ENCODE measurements at regions of chr2 and their contacts with region 1.

Region 1: DNA sequence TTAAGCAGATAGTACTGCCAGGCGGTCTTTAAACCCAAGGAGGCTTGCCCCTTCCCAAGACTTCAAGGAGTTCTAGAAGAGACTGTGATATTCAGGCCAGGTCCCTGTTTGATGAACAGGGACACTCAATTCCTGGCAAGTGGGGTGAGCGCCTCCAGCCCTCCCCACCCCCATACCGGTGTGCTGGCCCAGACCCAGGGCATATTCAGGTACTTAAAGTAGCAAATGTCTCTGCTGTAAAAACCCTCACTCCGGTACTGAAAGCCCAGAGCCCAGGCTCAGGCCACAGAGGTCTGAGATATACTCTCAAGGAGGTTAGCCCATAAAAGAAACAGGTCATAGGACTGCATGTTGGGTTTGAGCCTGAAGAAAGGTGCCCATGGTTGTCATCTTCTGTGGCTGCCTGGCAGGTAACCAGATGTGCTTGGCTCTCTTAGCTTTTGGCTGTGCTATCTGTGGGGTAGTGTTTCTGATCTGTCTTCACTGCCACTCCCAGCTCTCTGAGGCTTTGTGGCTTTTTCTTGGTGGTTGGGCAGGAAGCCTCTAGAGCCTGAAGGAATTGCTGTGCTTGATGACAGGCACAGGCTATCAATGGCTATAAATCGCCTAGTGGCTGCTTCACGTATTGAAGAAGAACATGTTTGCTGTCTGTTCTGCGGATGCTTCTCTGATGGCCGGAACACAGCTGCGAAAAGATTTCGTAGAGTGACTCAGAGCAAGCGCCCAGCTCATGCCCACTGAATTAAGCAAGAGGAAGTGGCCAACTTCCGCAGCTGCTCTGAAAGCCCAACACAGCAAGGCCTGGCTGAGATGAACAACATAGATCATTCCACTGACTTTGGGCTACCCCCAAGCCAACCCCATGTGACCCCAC is 63.3 kb upstream of the ALPP start:
- DNase-seq: peak; percentile 31 to 78 (median 70)
- ATAC-seq: peak; percentile 91
- H3K4me3 ChIP-seq: peak overlapping the region; percentile 25
- H3K4me3 Mint-ChIP-seq: peak overlapping the region; percentile 66 to 88 (median 78)
- H3K27ac ChIP-seq: peak overlapping the region; percentile 62
- H3K27ac Mint-ChIP-seq: peak overlapping the region; percentile 90 to 97 (median 92)
- H3K4me1 ChIP-seq: peaks cover 64 to 77% of the 10 kb centered on the region in 2 donors
- H3K4me1 Mint-ChIP-seq: peaks cover 62 to 100% (median 94%) of the 10 kb centered on the region in 7 donors
- H3K27me3 ChIP-seq: no peaks in the 10 kb centered on the region
- H3K27me3 Mint-ChIP-seq: no peaks in the 10 kb centered on the region

Region 2: GRCh38 chr2:231780909-231781797 is 534.1 kb before region 1 on chr2 and contains the start of gene PDE6D:
- CTCF ChIA-PET with region 1: no interaction called
- POLR2A ChIA-PET with region 1: no interaction called
- intact Hi-C with region 1: loop called in 1 of 2 experiments (anchors 10 kb)
- DNase-seq: peak; percentile 90 to 98 (median 94)
- ATAC-seq: peak; percentile 94
- H3K4me3 ChIP-seq: peak within 1 kb of the TSS; percentile 100
- H3K4me3 Mint-ChIP-seq: peak within 1 kb of the TSS; percentile 85 to 99 (median 98)
- H3K27ac ChIP-seq: peak within 1 kb of the TSS; percentile 82
- H3K27ac Mint-ChIP-seq: peak within 1 kb of the TSS; percentile 90 to 98 (median 94)
- H3K4me1 ChIP-seq: peaks cover 26 to 30% of the 10 kb centered on the region in 2 donors
- H3K4me1 Mint-ChIP-seq: peaks cover 45 to 76% (median 57%) of the 10 kb centered on the region in 7 donors
- H3K27me3 ChIP-seq: no peaks in the 10 kb centered on the region
- H3K27me3 Mint-ChIP-seq: peaks cover 0 to 5% (median 0%) of the 10 kb centered on the region in 5 donors
- total RNA-seq, gene PDE6D: 14.3 to 35.7 (median 25.2) TPM

Region 3: GRCh38 chr2:231961349-231962166 is 353.7 kb before region 1 on chr2 and contains the start of gene DIS3L2:
- CTCF ChIA-PET with region 1: no interaction called
- POLR2A ChIA-PET with region 1: interaction called, 5 read pairs
- intact Hi-C with region 1: loop called in 1 of 2 experiments (anchors 1 kb)
- DNase-seq: peak; percentile 66 to 83 (median 81)
- ATAC-seq: peak; percentile 96
- H3K4me3 ChIP-seq: peak within 1 kb of the TSS; percentile 79
- H3K4me3 Mint-ChIP-seq: peak within 1 kb of the TSS; percentile 83 to 96 (median 91)
- H3K27ac ChIP-seq: peak within 1 kb of the TSS; percentile 77
- H3K27ac Mint-ChIP-seq: peak within 1 kb of the TSS; percentile 78 to 96 (median 94)
- H3K4me1 ChIP-seq: peaks cover 14 to 17% of the 10 kb centered on the region in 2 donors
- H3K4me1 Mint-ChIP-seq: peaks cover 22 to 52% (median 45%) of the 10 kb centered on the region in 7 donors
- H3K27me3 ChIP-seq: no peaks in the 10 kb centered on the region
- H3K27me3 Mint-ChIP-seq: peaks cover 0 to 3% (median under 1%) of the 10 kb centered on the region in 5 donors
- total RNA-seq, gene DIS3L2: 47.1 to 78.4 (median 66.4) TPM

Region 4: GRCh38 chr2:232142049-232142448 is 173.2 kb before region 1 on chr2:
- CTCF ChIA-PET with region 1: no interaction called
- POLR2A ChIA-PET with region 1: interaction called, 4 read pairs
- intact Hi-C with region 1: loop called in 1 of 2 experiments (anchors 5 kb)
- DNase-seq: peak in 4 of 9 donors; percentile 22 to 41 (median 30)
- ATAC-seq: no peak
- H3K4me3 ChIP-seq: no peak overlapping the region
- H3K4me3 Mint-ChIP-seq: no peak overlapping the region
- H3K27ac ChIP-seq: no peak overlapping the region
- H3K27ac Mint-ChIP-seq: peak overlapping the region in 1 of 9 donors; percentile 72
- H3K4me1 ChIP-seq: peaks cover 0 to 29% of the 10 kb centered on the region in 2 donors
- H3K4me1 Mint-ChIP-seq: peaks cover 15 to 47% (median 41%) of the 10 kb centered on the region in 7 donors
- H3K27me3 ChIP-seq: no peaks in the 10 kb centered on the region
- H3K27me3 Mint-ChIP-seq: no peaks in the 10 kb centered on the region

Region 5: GRCh38 chr2:232299084-232299483 is 16.2 kb before region 1 on chr2:
- CTCF ChIA-PET with region 1: interaction called, 3 read pairs
- POLR2A ChIA-PET with region 1: interaction called, 6 read pairs
- intact Hi-C with region 1: loop called in 1 of 2 experiments (anchors 1 kb)
- DNase-seq: no peak
- ATAC-seq: peak; percentile 22
- H3K4me3 ChIP-seq: no peak overlapping the region
- H3K4me3 Mint-ChIP-seq: peak overlapping the region in 5 of 10 donors; percentile 11 to 57 (median 12)
- H3K27ac ChIP-seq: peak overlapping the region; percentile 13
- H3K27ac Mint-ChIP-seq: peak overlapping the region in 7 of 9 donors; percentile 24 to 69 (median 48)
- H3K4me1 ChIP-seq: peaks cover 0 to 7% of the 10 kb centered on the region in 2 donors
- H3K4me1 Mint-ChIP-seq: peaks cover 12 to 26% (median 20%) of the 10 kb centered on the region in 7 donors
- H3K27me3 ChIP-seq: no peaks in the 10 kb centered on the region
- H3K27me3 Mint-ChIP-seq: no peaks in the 10 kb centered on the region

Region 6: DNA sequence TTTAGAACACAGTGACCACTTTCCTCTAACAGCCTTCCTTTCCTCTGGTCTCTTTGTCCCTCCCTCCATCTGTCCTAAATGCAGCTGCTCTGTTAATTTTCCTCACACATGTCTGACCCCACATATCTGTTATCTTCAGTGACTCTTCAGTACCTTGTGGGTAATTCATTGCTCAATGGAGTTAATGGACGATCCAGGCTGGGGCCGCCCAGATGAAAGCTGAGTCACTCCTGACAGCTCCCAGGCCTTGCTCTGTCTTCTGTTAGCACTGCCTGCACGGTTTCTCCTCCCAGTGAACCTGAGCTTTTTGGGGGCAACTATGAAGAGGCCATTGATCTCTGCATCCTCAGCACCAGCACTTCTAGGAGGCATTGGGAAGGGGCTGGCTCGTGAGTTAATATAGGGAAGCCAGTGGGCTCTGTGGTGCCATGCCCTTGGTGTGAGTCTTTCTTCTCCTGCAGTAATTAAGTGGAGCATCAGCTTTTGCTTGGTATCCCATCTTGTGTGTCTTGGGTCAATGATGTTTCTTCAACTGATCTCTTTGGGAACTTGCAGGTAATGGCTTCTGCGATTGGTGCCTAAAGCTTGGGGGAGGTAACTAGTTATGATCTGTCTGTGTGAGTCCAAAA is 622.1 kb after region 1 on chr2:
- CTCF ChIA-PET with region 1: no interaction called
- POLR2A ChIA-PET with region 1: no interaction called
- intact Hi-C with region 1: no loop called
- DNase-seq: no peak
- ATAC-seq: no peak
- H3K4me3 ChIP-seq: no peak overlapping the region
- H3K4me3 Mint-ChIP-seq: no peak overlapping the region
- H3K27ac ChIP-seq: no peak overlapping the region
- H3K27ac Mint-ChIP-seq: no peak overlapping the region
- H3K4me1 ChIP-seq: no peaks in the 10 kb centered on the region
- H3K4me1 Mint-ChIP-seq: no peaks in the 10 kb centered on the region
- H3K27me3 ChIP-seq: no peaks in the 10 kb centered on the region
- H3K27me3 Mint-ChIP-seq: peaks cover 8 to 23% (median 20%) of the 10 kb centered on the region in 5 donors